ENCODE measurements at regions of chr2 and their contacts with region 1.

Region 1: DNA sequence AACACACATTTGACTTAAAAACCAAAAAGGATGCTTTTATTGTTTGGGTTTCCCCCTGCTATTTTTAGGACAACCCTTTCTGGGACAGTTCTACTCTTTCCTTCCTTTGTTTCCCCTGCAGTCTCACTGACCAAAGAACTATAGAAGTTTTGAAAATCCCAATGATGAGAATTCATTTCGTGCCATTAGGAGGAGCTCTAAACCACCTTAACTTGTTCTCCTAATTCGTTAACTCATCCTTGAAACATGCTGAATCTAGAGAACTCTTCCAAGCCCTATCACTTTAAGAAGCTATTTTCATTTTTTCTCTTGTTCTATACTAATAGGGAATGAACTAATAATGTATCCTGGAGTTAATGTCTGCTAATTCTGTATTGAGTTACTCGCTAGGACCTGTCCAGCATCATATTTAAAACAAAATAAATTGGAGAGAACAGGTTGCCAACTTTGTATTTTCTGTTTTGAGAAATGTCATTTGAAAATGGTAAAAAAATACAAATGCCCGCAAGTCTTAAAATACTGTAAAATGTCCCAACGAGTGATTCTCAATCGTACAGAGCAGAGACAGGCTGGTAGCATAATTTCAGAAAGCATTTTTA is 62.9 kb downstream of the AFTPH start:
- DNase-seq: no peak
- ATAC-seq: peak; percentile 65
- H3K4me3 ChIP-seq: no peak overlapping the region
- H3K4me1 ChIP-seq: no peaks in the 10 kb centered on the region
- CTCF ChIP-seq: no peak

Region 2: GRCh38 chr2:64374686-64375085 is 212.3 kb before region 1 on chr2:
- intact Hi-C with region 1: no loop called
- DNase-seq: no peak
- ATAC-seq: no peak
- H3K4me3 ChIP-seq: no peak overlapping the region
- H3K4me1 ChIP-seq: peaks cover 6% of the 10 kb centered on the region
- CTCF ChIP-seq: no peak

Region 3: DNA sequence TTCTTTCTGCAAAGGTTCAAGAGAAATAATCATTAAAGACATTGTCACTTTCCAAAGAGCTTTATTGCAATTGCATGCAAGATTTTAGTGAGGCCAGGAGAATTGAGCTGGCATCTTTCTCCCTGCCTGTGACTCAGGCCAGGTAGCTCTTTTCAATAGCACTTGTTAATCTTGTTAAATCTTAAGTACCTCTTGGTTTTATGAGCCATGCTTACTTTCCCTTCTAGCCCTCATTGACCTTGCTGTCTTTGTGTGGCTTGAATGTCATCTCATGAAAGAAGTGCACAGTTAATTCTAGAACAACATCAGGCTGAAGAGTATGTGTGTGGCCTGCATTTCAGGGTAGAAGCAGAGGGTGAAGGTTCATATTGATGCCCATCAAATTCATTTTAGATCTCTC is 147.8 kb before region 1 on chr2:
- intact Hi-C with region 1: no loop called
- DNase-seq: no peak
- ATAC-seq: peak; percentile 17
- H3K4me3 ChIP-seq: no peak overlapping the region
- H3K4me1 ChIP-seq: no peaks in the 10 kb centered on the region
- CTCF ChIP-seq: no peak

Region 4: GRCh38 chr2:64666810-64667438 is 79.9 kb after region 1 on chr2:
- intact Hi-C with region 1: no loop called
- DNase-seq: no peak
- ATAC-seq: peak; percentile 67
- H3K4me3 ChIP-seq: no peak overlapping the region
- H3K4me1 ChIP-seq: no peaks in the 10 kb centered on the region
- CTCF ChIP-seq: no peak

Region 5: GRCh38 chr2:64737547-64737946 is 150.6 kb after region 1 on chr2:
- intact Hi-C with region 1: no loop called
- DNase-seq: no peak
- ATAC-seq: no peak
- H3K4me3 ChIP-seq: no peak overlapping the region
- H3K4me1 ChIP-seq: peaks cover 3% of the 10 kb centered on the region
- CTCF ChIP-seq: no peak

Region 6: GRCh38 chr2:64873472-64873924 is 286.5 kb after region 1 on chr2:
- intact Hi-C with region 1: loop called (anchors 5 to 10 kb)
- DNase-seq: peak; percentile 83 to 89 (median 86)
- ATAC-seq: peak; percentile 91
- H3K4me3 ChIP-seq: no peak overlapping the region
- H3K4me1 ChIP-seq: no peaks in the 10 kb centered on the region
- CTCF ChIP-seq: peak; percentile 96